CD8-positive, alpha-beta T cell (primary cell): ENCODE measurements at regions of chr2 and their contacts with region 1.

Region 1: DNA sequence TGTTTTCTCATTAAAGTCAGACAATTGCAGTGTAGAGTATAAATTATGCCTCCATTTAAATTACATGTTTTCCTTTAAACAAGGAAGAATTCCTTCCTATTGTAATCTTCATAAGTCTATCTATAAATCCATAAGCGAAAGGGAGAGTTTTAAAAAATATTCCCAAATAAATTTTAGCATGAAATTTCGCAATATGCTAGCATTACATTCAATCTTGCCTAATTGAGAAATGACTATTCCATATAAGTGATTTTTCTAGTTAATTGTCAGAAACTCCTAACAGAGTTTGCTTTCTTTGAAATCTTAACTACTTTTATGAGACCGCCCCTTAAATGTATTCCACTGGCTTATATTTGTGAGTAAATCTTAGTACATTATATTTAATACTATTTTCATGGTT is 133.1 kb upstream of the CRIM1 start:
- DNase-seq: no peak
- ATAC-seq: no peak
- H3K4me3 ChIP-seq: no peak overlapping the region
- H3K4me3 Mint-ChIP-seq: no peak overlapping the region
- H3K27ac ChIP-seq: no peak overlapping the region
- H3K27ac Mint-ChIP-seq: no peak overlapping the region
- H3K4me1 ChIP-seq: no peaks in the 10 kb centered on the region
- H3K4me1 Mint-ChIP-seq: no peaks in the 10 kb centered on the region
- H3K27me3 ChIP-seq: no peaks in the 10 kb centered on the region
- H3K27me3 Mint-ChIP-seq: no peaks in the 10 kb centered on the region
- CTCF ChIP-seq: no peak

Region 2: DNA sequence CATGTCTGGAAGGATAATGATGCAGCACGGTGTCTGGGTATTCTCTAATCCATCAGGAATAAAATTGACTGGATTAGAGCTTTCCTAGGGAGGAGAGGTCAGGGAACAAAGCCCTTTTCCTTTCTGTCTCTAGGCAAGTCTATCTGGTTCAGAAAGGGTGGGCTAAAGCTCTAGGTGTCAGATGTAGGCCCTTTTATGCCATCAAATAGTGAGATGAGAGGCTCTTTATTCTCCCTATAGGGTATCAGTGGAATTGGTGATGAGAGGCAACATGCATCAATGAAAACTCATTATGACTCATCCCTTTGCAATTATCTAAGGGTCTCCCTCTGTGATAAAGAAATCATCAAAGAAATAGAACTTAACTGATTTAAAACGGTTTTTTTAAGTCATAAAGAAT is 194.9 kb before region 1 on chr2:
- CTCF ChIA-PET with region 1: no interaction called
- POLR2A ChIA-PET with region 1: no interaction called
- intact Hi-C with region 1: no loop called
- DNase-seq: no peak
- ATAC-seq: no peak
- H3K4me3 ChIP-seq: no peak overlapping the region
- H3K4me3 Mint-ChIP-seq: no peak overlapping the region
- H3K27ac ChIP-seq: no peak overlapping the region
- H3K27ac Mint-ChIP-seq: no peak overlapping the region
- H3K4me1 ChIP-seq: no peaks in the 10 kb centered on the region
- H3K4me1 Mint-ChIP-seq: peaks cover 2% of the 10 kb centered on the region
- H3K27me3 ChIP-seq: no peaks in the 10 kb centered on the region
- H3K27me3 Mint-ChIP-seq: no peaks in the 10 kb centered on the region
- CTCF ChIP-seq: no peak

Region 3: GRCh38 chr2:36266536-36267121 is 44.1 kb after region 1 on chr2:
- CTCF ChIA-PET with region 1: no interaction called
- POLR2A ChIA-PET with region 1: no interaction called
- intact Hi-C with region 1: loop called in 1 of 2 experiments (anchors 2 kb)
- DNase-seq: peak in 1 of 9 experiments; percentile 29
- ATAC-seq: no peak
- H3K4me3 ChIP-seq: no peak overlapping the region
- H3K4me3 Mint-ChIP-seq: no peak overlapping the region
- H3K27ac ChIP-seq: no peak overlapping the region
- H3K27ac Mint-ChIP-seq: no peak overlapping the region
- H3K4me1 ChIP-seq: no peaks in the 10 kb centered on the region
- H3K4me1 Mint-ChIP-seq: peaks cover 11% of the 10 kb centered on the region
- H3K27me3 ChIP-seq: no peaks in the 10 kb centered on the region
- H3K27me3 Mint-ChIP-seq: no peaks in the 10 kb centered on the region
- CTCF ChIP-seq: no peak